ENCODE measurements at regions of chr12 and their contacts with region 1.

Region 1: GRCh38 chr12:63457857-63458256 is 210.4 kb downstream of the DPY19L2 start:
- DNase-seq: no peak
- ATAC-seq: no peak
- H3K4me3 ChIP-seq: no peak overlapping the region
- H3K27ac ChIP-seq: no peak overlapping the region
- H3K4me1 ChIP-seq: no peaks in the 10 kb centered on the region
- H3K27me3 ChIP-seq: no peaks in the 10 kb centered on the region
- CTCF ChIP-seq: no peak

Region 2: GRCh38 chr12:63325757-63326156 is 132.1 kb before region 1 on chr12:
- intact Hi-C with region 1: no loop called
- DNase-seq: peak in 1 of 2 donors; percentile 21
- ATAC-seq: peak in 6 of 8 donors; percentile 58 to 93 (median 74)
- H3K4me3 ChIP-seq: no peak overlapping the region
- H3K27ac ChIP-seq: peak overlapping the region in 6 of 10 donors; percentile 0 to 65 (median 51)
- H3K4me1 ChIP-seq: peaks cover 0 to 28% (median 5%) of the 10 kb centered on the region in 9 donors
- H3K27me3 ChIP-seq: no peaks in the 10 kb centered on the region
- CTCF ChIP-seq: no peak

Region 3: DNA sequence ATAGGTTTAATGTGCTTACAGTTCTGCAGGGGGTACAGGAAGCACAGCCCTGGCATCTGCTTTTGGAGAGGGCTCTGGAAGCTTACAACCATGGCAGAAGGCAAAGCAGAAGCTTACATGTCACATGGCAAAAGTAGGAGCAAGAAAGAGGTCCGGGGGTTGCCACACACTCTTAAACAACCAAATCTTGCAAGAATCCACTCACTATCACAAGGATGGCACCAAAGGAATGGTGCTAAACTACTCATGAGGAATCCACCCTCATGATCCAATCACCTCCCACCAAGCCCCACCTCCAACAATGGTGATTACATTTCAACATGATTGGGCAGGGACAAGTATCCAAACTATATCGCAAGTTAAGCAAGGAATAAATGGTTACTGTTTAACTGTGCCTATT is 51.1 kb before region 1 on chr12:
- intact Hi-C with region 1: loop called in 1 of 10 experiments (anchors 2 kb)
- DNase-seq: no peak
- ATAC-seq: no peak
- H3K4me3 ChIP-seq: no peak overlapping the region
- H3K27ac ChIP-seq: no peak overlapping the region
- H3K4me1 ChIP-seq: peaks cover 0 to 35% (median 6%) of the 10 kb centered on the region in 9 donors
- H3K27me3 ChIP-seq: no peaks in the 10 kb centered on the region
- CTCF ChIP-seq: no peak

Region 4: GRCh38 chr12:63525831-63526230 is 68.0 kb after region 1 on chr12:
- intact Hi-C with region 1: no loop called
- DNase-seq: no peak
- ATAC-seq: no peak
- H3K4me3 ChIP-seq: no peak overlapping the region
- H3K27ac ChIP-seq: no peak overlapping the region
- H3K4me1 ChIP-seq: no peaks in the 10 kb centered on the region
- H3K27me3 ChIP-seq: no peaks in the 10 kb centered on the region
- CTCF ChIP-seq: no peak